ENCODE measurements at regions of chr1 and their contacts with region 1.

Region 1: GRCh38 chr1:161973924-161974845 is 49.5 kb downstream of the OLFML2B start:
- DNase-seq: no peak
- H3K4me3 ChIP-seq: no peak overlapping the region
- H3K27ac ChIP-seq: no peak overlapping the region
- H3K4me1 ChIP-seq: no peaks in the 10 kb centered on the region
- H3K27me3 ChIP-seq: peaks cover 14% of the 10 kb centered on the region
- CTCF ChIP-seq: no peak

Region 2: DNA sequence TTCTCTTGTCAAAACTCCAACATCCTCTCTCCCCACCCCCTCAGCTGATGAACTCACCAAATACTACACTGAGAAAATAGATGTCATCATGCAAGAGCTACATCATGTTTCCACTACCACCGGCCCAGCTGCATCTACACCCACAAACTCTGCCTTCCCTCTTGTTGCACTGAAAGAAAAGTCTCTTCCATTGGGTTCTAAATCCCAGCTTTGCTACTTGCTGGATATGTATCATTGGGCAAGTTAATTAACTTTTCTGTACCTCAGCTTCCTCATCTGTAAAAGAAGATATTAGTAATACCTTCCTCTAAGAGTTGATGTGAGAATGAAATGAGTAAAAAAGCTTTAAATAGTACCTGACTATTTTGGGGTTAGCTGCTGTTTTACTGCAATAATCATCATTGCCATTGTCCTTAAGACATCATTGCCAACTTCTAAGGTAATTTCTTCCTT is 59.1 kb before region 1 on chr1:
- CTCF ChIA-PET with region 1: no interaction called
- dilution Hi-C with region 1: loop called (anchors 10 kb)
- in situ Hi-C with region 1: no loop called
- intact Hi-C with region 1: no loop called
- DNase-seq: no peak
- H3K4me3 ChIP-seq: no peak overlapping the region
- H3K27ac ChIP-seq: no peak overlapping the region
- H3K4me1 ChIP-seq: no peaks in the 10 kb centered on the region
- H3K27me3 ChIP-seq: no peaks in the 10 kb centered on the region
- CTCF ChIP-seq: no peak

Region 3: GRCh38 chr1:161933592-161934588 is 40.3 kb before region 1 on chr1:
- CTCF ChIA-PET with region 1: no interaction called
- dilution Hi-C with region 1: no loop called
- in situ Hi-C with region 1: no loop called
- intact Hi-C with region 1: no loop called
- DNase-seq: no peak
- H3K4me3 ChIP-seq: no peak overlapping the region
- H3K27ac ChIP-seq: no peak overlapping the region
- H3K4me1 ChIP-seq: no peaks in the 10 kb centered on the region
- H3K27me3 ChIP-seq: no peaks in the 10 kb centered on the region
- CTCF ChIP-seq: no peak